ENCODE measurements at regions of chr11 and their contacts with region 1.

Region 1: DNA sequence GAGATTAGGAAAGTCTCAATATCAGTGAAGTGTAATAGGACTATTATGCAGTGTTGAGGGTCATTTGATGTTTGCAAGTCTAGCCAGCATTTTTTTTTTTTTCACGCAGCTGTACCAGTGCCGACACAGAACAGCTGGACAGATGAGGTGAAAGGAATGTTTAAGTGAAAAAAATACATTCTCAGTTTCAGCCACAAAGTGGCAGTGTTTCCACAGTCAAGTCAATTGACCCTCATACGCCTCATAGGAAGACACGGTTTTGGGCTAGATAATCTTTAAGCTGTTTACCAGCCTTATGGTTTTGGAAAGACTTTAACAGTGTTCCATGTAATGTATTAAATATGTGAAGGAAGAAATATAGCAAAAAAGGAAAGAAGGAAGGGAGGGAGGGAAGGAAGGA is 349.9 kb upstream of the ANO3 start:
- DNase-seq: no peak
- ATAC-seq: peak in 1 of 2 donors; percentile 72
- H3K4me3 ChIP-seq: no peak overlapping the region
- H3K27ac ChIP-seq: no peak overlapping the region
- H3K4me1 ChIP-seq: no peaks in the 10 kb centered on the region
- H3K27me3 ChIP-seq: no peaks in the 10 kb centered on the region
- CTCF ChIP-seq: peak in 3 of 5 experiments; percentile 42 to 45 (median 42)
- POLR2A ChIP-seq: no peak

Region 2: GRCh38 chr11:25211635-25212251 is 770.3 kb before region 1 on chr11:
- in situ Hi-C with region 1: no loop called
- intact Hi-C with region 1: no loop called
- DNase-seq: no peak
- ATAC-seq: no peak
- H3K4me3 ChIP-seq: no peak overlapping the region
- H3K27ac ChIP-seq: no peak overlapping the region
- H3K4me1 ChIP-seq: no peaks in the 10 kb centered on the region
- H3K27me3 ChIP-seq: no peaks in the 10 kb centered on the region
- CTCF ChIP-seq: no peak
- POLR2A ChIP-seq: no peak

Region 3: GRCh38 chr11:26199331-26200095 is 217.5 kb after region 1 on chr11:
- in situ Hi-C with region 1: loop called in 1 of 4 experiments (anchors 25 kb)
- intact Hi-C with region 1: no loop called
- DNase-seq: no peak
- ATAC-seq: no peak
- H3K4me3 ChIP-seq: no peak overlapping the region
- H3K27ac ChIP-seq: no peak overlapping the region
- H3K4me1 ChIP-seq: no peaks in the 10 kb centered on the region
- H3K27me3 ChIP-seq: no peaks in the 10 kb centered on the region
- CTCF ChIP-seq: no peak
- POLR2A ChIP-seq: no peak

Region 4: GRCh38 chr11:26227296-26227695 is 245.3 kb after region 1 on chr11:
- in situ Hi-C with region 1: loop called in 1 of 4 experiments (anchors 25 kb)
- intact Hi-C with region 1: loop called (anchors 5 kb)
- DNase-seq: no peak
- ATAC-seq: no peak
- H3K4me3 ChIP-seq: no peak overlapping the region
- H3K27ac ChIP-seq: no peak overlapping the region
- H3K4me1 ChIP-seq: no peaks in the 10 kb centered on the region
- H3K27me3 ChIP-seq: no peaks in the 10 kb centered on the region
- CTCF ChIP-seq: peak in 4 of 5 experiments; percentile 29 to 42 (median 38)
- POLR2A ChIP-seq: no peak

Region 5: DNA sequence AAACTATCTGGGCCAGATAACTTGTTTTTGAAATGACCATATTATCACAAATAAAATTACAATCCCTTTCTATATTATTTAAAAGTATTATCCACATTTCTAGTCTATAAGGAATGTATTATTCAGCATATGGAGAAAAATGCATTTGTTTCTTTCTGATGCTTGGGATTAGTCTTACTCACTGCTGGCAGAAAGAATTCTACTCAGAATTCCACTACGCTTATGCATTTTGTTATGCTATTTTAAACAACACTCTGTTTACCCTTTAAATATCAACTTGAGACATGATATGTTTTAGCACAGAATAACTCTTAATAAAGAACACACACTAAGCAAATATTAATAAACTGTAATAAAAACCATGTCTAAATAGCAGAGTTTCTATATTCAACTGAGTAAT is 272.4 kb after region 1 on chr11:
- in situ Hi-C with region 1: loop called in 2 of 4 experiments (anchors 25 kb)
- intact Hi-C with region 1: no loop called
- DNase-seq: no peak
- ATAC-seq: no peak
- H3K4me3 ChIP-seq: no peak overlapping the region
- H3K27ac ChIP-seq: no peak overlapping the region
- H3K4me1 ChIP-seq: no peaks in the 10 kb centered on the region
- H3K27me3 ChIP-seq: no peaks in the 10 kb centered on the region
- CTCF ChIP-seq: no peak
- POLR2A ChIP-seq: no peak

Region 6: DNA sequence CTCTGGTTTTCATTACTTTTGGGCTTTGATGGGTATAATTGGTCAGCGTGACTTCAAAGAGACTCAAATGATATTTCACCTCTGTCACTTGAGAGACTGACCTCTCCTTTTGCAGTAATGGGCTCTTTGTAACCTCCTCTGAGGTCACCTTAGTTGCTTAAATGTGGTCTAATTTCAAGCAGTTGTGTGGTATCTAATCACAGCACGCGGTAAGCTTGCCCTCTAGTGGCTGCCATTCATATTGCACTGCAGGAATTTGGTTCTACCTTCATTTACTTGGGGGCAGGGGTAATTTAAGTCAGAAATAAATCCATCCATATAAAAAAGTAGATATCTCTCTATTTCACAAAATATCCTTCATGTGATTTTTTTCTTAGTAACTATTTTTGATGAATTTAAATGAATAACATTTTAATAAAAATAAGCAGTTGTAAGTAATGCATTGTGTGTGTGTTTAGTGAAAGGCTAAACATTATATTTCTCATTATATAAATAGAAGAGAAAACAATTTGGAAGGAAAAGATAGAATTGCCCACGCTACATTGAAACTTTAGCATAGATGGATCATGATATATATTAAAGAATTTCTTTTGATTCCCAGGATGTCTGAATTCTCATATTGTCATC is 294.9 kb after region 1 on chr11:
- in situ Hi-C with region 1: loop called in 3 of 4 experiments (anchors 5 to 25 kb)
- intact Hi-C with region 1: loop called (anchors 1 kb)
- DNase-seq: peak in 1 of 2 donors; percentile 18
- ATAC-seq: peak in 1 of 2 donors; percentile 53
- H3K4me3 ChIP-seq: no peak overlapping the region
- H3K27ac ChIP-seq: no peak overlapping the region
- H3K4me1 ChIP-seq: no peaks in the 10 kb centered on the region
- H3K27me3 ChIP-seq: no peaks in the 10 kb centered on the region
- CTCF ChIP-seq: peak; percentile 68 to 90 (median 70)
- POLR2A ChIP-seq: no peak